CD8-positive, alpha-beta memory T cell (primary cell): ENCODE measurements at regions of chr5 and their contacts with region 1.

Region 1: GRCh38 chr5:159987031-159987674 is 21.8 kb upstream of the TTC1 start:
- DNase-seq: peak; percentile 53 to 78 (median 62)
- H3K4me3 ChIP-seq: peak overlapping the region; percentile 47
- H3K4me3 Mint-ChIP-seq: peak overlapping the region; percentile 43 to 85 (median 73)
- H3K27ac ChIP-seq: no peak overlapping the region
- H3K27ac Mint-ChIP-seq: peak overlapping the region in 1 of 8 donors; percentile 59
- H3K4me1 ChIP-seq: peaks cover 4% of the 10 kb centered on the region
- H3K4me1 Mint-ChIP-seq: peaks cover 0 to 5% (median 0%) of the 10 kb centered on the region in 3 donors
- H3K27me3 ChIP-seq: peaks cover 8% of the 10 kb centered on the region
- H3K27me3 Mint-ChIP-seq: peaks cover 26 to 59% of the 10 kb centered on the region in 2 donors

Region 2: GRCh38 chr5:159156426-159157238 is 830.5 kb before region 1 on chr5:
- CTCF ChIA-PET with region 1: interaction called, 18 read pairs
- POLR2A ChIA-PET with region 1: no interaction called
- DNase-seq: peak in 4 of 5 donors; percentile 5 to 69 (median 59)
- H3K4me3 ChIP-seq: no peak overlapping the region
- H3K4me3 Mint-ChIP-seq: peak overlapping the region in 1 of 7 donors; percentile 13
- H3K27ac ChIP-seq: no peak overlapping the region
- H3K27ac Mint-ChIP-seq: peak overlapping the region; percentile 13 to 89 (median 84)
- H3K4me1 ChIP-seq: peaks cover 7% of the 10 kb centered on the region
- H3K4me1 Mint-ChIP-seq: peaks cover 12 to 23% (median 15%) of the 10 kb centered on the region in 3 donors
- H3K27me3 ChIP-seq: no peaks in the 10 kb centered on the region
- H3K27me3 Mint-ChIP-seq: no peaks in the 10 kb centered on the region

Region 3: DNA sequence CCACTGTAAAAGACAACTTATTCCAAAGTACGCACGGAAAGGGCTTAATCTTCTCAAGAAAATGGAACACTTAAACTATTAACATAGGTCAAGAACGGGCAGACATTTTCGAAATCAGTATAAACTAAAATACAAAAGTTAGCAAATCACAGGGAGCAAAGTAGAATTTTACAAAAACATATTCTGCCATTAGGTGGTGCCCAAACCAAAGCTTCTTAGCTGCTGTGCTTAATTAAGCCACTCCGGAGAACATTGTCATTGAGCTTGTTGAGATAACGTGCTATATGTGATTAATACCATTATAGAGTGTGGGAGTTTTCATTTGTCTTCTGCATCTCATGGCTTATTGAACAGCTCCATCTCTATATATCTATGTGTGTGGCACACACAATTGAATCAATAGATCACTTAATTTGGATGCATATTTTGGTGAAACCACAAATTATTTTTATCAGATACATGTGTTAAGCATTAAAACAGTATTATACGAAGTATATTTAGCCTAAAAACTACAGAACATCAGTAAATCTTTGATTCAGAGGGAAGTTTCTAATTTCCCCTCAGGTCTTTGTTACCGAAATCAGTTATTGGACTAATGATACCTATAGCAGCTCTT is 700.6 kb before region 1 on chr5:
- CTCF ChIA-PET with region 1: interaction called, 21 read pairs
- POLR2A ChIA-PET with region 1: no interaction called
- DNase-seq: peak in 1 of 5 donors; percentile 28
- H3K4me3 ChIP-seq: no peak overlapping the region
- H3K4me3 Mint-ChIP-seq: no peak overlapping the region
- H3K27ac ChIP-seq: no peak overlapping the region
- H3K27ac Mint-ChIP-seq: no peak overlapping the region
- H3K4me1 ChIP-seq: no peaks in the 10 kb centered on the region
- H3K4me1 Mint-ChIP-seq: no peaks in the 10 kb centered on the region
- H3K27me3 ChIP-seq: no peaks in the 10 kb centered on the region
- H3K27me3 Mint-ChIP-seq: no peaks in the 10 kb centered on the region

Region 4: DNA sequence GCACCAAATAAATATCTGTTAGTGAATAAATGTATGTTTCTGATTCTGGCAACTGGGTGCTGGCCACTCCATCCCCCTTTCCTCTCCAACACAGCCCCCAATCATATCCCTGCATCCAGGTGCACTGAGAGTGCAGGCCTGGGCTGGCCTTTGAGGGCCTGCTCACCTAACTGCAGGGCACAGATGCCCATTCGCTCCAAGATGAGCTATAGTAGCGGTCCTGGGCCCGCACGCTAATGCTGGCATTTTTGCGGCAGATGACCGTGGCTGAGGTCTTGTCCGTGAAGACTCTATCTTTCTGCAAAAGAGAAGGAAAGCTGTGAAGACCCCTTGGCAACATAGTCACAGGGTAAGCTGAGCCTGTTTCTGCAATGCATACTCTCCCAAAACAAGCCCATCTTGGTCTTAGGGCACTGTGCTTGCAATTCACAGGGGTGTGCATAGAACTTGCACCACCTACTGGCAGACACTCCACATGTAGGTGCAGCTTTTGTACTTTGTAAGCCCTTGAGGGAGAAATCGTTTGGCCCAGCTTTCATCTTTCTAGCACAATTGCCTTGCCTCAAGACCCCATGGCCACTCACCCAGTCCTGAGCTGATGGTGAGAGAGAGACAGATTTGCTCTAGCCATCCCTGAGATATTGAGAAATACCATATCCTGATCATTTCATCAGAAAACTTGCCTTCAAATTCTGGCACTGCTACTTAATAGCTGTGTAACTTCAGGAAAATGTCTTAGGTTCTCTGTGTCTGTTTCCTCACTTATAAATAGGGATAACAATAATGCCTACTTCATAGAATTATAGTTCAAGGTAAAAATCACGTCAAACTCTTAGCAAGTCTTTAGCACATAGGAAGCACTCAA is 670.4 kb before region 1 on chr5:
- CTCF ChIA-PET with region 1: interaction called, 11 read pairs
- POLR2A ChIA-PET with region 1: no interaction called
- DNase-seq: peak in 3 of 5 donors; percentile 14 to 47 (median 17)
- H3K4me3 ChIP-seq: no peak overlapping the region
- H3K4me3 Mint-ChIP-seq: no peak overlapping the region
- H3K27ac ChIP-seq: no peak overlapping the region
- H3K27ac Mint-ChIP-seq: peak overlapping the region in 1 of 8 donors; percentile 84
- H3K4me1 ChIP-seq: no peaks in the 10 kb centered on the region
- H3K4me1 Mint-ChIP-seq: no peaks in the 10 kb centered on the region
- H3K27me3 ChIP-seq: peaks cover 4% of the 10 kb centered on the region
- H3K27me3 Mint-ChIP-seq: peaks cover 0 to 13% of the 10 kb centered on the region in 2 donors

Region 5: GRCh38 chr5:159341914-159342313 is 645.2 kb before region 1 on chr5:
- CTCF ChIA-PET with region 1: no interaction called
- POLR2A ChIA-PET with region 1: no interaction called
- DNase-seq: peak in 4 of 5 donors; percentile 58 to 83 (median 70)
- H3K4me3 ChIP-seq: no peak overlapping the region
- H3K4me3 Mint-ChIP-seq: peak overlapping the region in 6 of 7 donors; percentile 15 to 62 (median 45)
- H3K27ac ChIP-seq: no peak overlapping the region
- H3K27ac Mint-ChIP-seq: peak overlapping the region; percentile 35 to 91 (median 84)
- H3K4me1 ChIP-seq: peaks cover 41% of the 10 kb centered on the region
- H3K4me1 Mint-ChIP-seq: peaks cover 52 to 76% (median 68%) of the 10 kb centered on the region in 3 donors
- H3K27me3 ChIP-seq: no peaks in the 10 kb centered on the region
- H3K27me3 Mint-ChIP-seq: peaks cover 0 to 4% of the 10 kb centered on the region in 2 donors

Region 6: DNA sequence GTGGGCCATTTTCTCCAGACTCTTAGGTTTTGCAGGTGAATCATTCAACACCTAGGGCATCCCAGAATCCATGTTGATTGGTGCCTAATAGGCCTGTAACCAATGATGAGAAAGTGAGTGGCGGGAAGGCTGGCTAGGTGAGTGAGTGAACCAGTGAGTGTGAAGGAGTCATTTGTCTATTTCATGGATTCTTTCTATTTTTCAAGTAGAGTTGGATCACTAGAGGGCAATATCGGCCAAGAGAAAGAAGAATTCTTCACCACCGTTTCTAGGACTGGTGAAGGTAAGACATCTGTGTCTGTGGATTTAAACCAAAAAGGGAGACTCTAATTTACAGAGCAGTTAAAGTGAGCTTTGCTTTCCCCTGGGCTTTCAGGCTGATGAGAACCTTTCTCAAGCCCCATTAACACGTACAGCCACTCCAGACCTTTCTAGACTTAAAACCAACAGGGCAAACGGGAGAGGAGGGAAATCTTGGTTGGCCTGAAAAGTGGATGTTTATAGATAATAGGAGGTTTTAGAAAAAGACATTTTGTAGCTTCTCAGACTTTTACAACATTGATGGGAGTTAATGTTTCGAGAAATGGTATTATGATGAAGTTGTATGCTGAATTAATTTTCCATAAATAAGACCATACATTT is 542.6 kb before region 1 on chr5:
- CTCF ChIA-PET with region 1: interaction called, 13 read pairs
- POLR2A ChIA-PET with region 1: no interaction called
- DNase-seq: peak in 2 of 5 donors; percentile 16 to 22
- H3K4me3 ChIP-seq: no peak overlapping the region
- H3K4me3 Mint-ChIP-seq: no peak overlapping the region
- H3K27ac ChIP-seq: no peak overlapping the region
- H3K27ac Mint-ChIP-seq: peak overlapping the region in 1 of 8 donors; percentile 44
- H3K4me1 ChIP-seq: no peaks in the 10 kb centered on the region
- H3K4me1 Mint-ChIP-seq: peaks cover 0 to 6% (median 5%) of the 10 kb centered on the region in 3 donors
- H3K27me3 ChIP-seq: no peaks in the 10 kb centered on the region
- H3K27me3 Mint-ChIP-seq: peaks cover 2 to 4% of the 10 kb centered on the region in 2 donors

Region 7: GRCh38 chr5:159515909-159516415 is 471.2 kb before region 1 on chr5:
- CTCF ChIA-PET with region 1: interaction called, 11 read pairs
- POLR2A ChIA-PET with region 1: no interaction called
- DNase-seq: peak; percentile 28 to 71 (median 50)
- H3K4me3 ChIP-seq: no peak overlapping the region
- H3K4me3 Mint-ChIP-seq: peak overlapping the region in 1 of 7 donors; percentile 47
- H3K27ac ChIP-seq: no peak overlapping the region
- H3K27ac Mint-ChIP-seq: no peak overlapping the region
- H3K4me1 ChIP-seq: no peaks in the 10 kb centered on the region
- H3K4me1 Mint-ChIP-seq: peaks cover 3 to 8% (median 8%) of the 10 kb centered on the region in 3 donors
- H3K27me3 ChIP-seq: no peaks in the 10 kb centered on the region
- H3K27me3 Mint-ChIP-seq: peaks cover 3 to 8% of the 10 kb centered on the region in 2 donors

Region 8: DNA sequence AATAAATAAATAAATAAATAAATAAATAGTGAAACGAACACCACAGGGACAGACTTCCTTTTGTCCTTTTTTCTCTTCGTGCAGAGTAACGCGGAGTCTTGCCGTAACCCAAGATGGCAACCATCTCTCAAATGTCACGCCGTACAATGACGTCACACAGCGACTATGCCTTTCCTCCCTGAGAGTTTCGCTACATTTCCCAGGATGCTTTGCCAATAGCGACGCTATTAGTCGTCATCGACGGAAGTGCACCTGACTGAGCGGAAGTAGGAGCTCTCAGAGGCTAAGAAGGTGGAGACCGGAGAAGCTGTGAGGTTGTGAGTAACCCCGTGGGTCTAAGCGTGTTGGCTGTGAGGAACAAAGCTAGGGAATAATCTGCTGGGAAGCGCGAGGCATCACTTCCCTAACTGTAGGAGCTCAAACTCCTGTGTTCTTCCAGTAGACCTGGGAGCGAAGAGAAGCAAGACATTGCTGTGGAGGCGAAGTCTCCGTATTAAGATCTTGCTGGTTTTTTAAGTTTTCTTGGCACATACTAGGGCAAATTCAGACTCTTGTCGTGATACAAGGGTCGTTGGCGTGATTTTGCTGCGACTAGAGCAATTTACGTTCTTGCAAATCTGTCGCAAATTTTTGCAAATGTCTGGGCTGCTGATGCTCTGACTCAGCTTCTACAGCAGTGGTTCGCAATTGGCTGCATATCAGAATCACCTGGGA is 21.9 kb after region 1 on chr5 and contains the start of gene TTC1:
- CTCF ChIA-PET with region 1: interaction called, 16 read pairs
- POLR2A ChIA-PET with region 1: interaction called, 4 read pairs
- DNase-seq: peak; percentile 82 to 96 (median 90)
- H3K4me3 ChIP-seq: peak within 1 kb of the TSS; percentile 100
- H3K4me3 Mint-ChIP-seq: peak within 1 kb of the TSS; percentile 92 to 99 (median 97)
- H3K27ac ChIP-seq: peak within 1 kb of the TSS; percentile 98
- H3K27ac Mint-ChIP-seq: peak within 1 kb of the TSS; percentile 82 to 99 (median 98)
- H3K4me1 ChIP-seq: peaks cover 14% of the 10 kb centered on the region
- H3K4me1 Mint-ChIP-seq: peaks cover 26 to 38% (median 33%) of the 10 kb centered on the region in 3 donors
- H3K27me3 ChIP-seq: no peaks in the 10 kb centered on the region
- H3K27me3 Mint-ChIP-seq: no peaks in the 10 kb centered on the region
- total RNA-seq, gene TTC1: 66.4 to 70.7 TPM